Ovary (tissue), 10 donors: ENCODE measurements at regions of chr11 and their contacts with region 1.

Region 1: DNA sequence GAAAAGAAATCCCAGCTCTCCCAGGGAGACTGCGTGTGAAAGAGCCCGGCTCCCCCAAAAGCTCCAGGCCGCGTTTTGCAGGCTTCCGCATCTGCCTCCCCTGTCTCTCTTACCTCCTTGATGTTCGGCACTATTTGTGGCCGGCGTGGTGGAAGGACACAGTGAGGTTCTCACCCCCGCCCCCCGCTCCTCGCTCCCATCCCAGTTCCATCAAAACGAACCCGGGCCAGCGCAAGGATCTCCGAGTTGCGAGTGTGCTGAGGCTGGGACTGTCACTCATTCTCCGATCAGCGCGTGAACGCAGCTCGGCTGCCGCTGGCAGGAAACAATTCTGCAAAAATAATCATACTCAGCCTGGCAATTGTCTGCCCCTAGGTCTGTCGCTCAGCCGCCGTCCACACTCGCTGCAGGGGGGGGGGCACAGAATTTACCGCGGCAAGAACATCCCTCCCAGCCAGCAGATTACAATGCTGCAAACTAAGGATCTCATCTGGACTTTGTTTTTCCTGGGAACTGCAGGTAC is at the start of gene NCAM1:
- DNase-seq: peak; percentile 81 to 93 (median 88)
- H3K4me3 ChIP-seq: peak within 1 kb of the TSS; percentile 62
- H3K27ac ChIP-seq: peak within 1 kb of the TSS in 1 of 2 donors; percentile 27
- H3K4me1 ChIP-seq: no peaks in the 10 kb centered on the region
- H3K27me3 ChIP-seq: no peaks in the 10 kb centered on the region
- CTCF ChIP-seq: no peak
- EP300 ChIP-seq: no peak
- POLR2A ChIP-seq: no peak
- total RNA-seq, gene NCAM1: 57.7 to 194 (median 114) TPM

Region 2: DNA sequence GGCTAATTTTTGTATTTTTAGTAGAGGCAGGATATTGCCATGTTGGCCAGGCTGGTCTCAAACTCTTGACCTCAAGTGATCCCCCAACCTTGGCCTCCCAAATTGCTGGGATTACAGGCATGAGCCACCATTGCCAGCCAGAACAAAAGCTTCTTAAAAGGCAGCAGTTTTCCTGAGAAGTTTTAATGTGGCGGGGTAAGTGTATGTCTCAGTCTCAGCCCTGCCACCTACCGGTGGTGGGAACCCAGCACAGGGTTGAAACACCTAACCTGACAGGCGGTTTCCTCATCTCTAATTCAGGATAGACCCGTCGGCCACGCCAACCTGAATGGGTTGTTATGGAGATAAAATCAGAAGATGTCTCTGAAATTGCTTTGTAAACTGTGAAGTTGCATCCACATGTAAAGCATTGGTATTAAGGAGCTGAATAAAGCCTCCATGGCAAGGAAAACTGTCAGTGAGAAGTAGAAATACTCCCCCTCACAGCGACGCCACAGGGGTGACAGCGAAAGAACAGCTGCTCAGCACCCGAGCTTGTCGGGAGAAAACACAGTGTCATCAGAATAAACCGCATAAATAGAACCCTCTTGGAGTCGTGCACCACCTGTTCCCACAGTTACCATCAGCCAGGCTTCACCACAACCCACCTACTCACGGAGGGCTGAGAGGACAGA is 165.9 kb before region 1 on chr11:
- intact Hi-C with region 1: loop called in 1 of 4 experiments (anchors 10 kb)
- DNase-seq: peak in 1 of 5 donors; percentile 21
- H3K4me3 ChIP-seq: no peak overlapping the region
- H3K27ac ChIP-seq: no peak overlapping the region
- H3K4me1 ChIP-seq: peaks cover 4% of the 10 kb centered on the region
- H3K27me3 ChIP-seq: no peaks in the 10 kb centered on the region
- CTCF ChIP-seq: no peak
- EP300 ChIP-seq: no peak
- POLR2A ChIP-seq: no peak

Region 3: DNA sequence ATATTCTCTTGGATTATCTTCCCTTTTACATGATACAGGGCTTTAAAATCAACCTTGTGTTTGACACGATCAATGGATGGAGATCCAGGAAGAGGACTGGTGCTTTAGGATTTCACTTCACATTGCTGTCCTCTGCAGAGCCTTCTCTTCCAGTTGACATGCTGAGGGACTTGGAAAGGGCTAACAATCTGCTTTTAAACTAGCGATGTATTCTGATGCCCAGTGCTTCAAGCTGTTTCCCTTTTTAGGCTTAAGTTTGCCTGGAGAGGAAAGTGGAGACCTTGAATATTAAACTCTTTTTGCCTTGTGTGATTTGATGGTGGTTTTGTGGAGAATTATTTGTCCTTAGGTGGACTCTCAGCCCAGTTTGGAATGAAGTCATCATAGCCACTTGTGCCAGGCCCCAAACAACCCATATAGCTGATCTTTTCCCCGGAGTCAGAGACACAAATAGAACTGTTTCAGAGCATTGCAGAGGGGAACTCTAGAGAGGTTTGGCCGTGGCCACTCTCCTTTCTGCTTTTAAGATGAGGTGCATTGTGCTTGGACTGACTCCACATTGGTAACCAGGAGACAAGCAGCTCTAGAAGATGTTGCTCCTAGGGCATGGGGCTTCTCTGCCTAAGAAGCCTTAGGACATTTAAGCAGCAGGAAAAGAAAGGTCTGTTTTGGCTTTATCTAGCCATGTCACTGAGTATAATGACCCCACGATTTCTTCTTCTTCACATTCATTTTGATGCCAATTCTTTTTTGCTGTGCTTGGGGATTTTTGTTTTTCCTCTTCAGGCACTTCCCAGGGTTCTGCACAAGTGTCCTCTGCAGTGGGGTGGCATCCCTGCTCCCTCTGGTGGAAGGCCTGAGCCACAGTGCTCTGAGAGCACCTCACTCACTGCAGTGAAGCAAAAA is 152.8 kb after region 1 on chr11:
- intact Hi-C with region 1: loop called in 1 of 4 experiments (anchors 10 kb)
- DNase-seq: peak; percentile 49 to 68 (median 64)
- H3K4me3 ChIP-seq: no peak overlapping the region
- H3K27ac ChIP-seq: peak overlapping the region; percentile 36 to 41
- H3K4me1 ChIP-seq: peaks cover 11% of the 10 kb centered on the region
- H3K27me3 ChIP-seq: no peaks in the 10 kb centered on the region
- CTCF ChIP-seq: peak in 2 of 3 donors; percentile 35 to 54
- EP300 ChIP-seq: no peak
- POLR2A ChIP-seq: no peak